Transverse colon (tissue), 4 donors: ENCODE measurements at regions of chr18 and their contacts with region 1.

Region 1: DNA sequence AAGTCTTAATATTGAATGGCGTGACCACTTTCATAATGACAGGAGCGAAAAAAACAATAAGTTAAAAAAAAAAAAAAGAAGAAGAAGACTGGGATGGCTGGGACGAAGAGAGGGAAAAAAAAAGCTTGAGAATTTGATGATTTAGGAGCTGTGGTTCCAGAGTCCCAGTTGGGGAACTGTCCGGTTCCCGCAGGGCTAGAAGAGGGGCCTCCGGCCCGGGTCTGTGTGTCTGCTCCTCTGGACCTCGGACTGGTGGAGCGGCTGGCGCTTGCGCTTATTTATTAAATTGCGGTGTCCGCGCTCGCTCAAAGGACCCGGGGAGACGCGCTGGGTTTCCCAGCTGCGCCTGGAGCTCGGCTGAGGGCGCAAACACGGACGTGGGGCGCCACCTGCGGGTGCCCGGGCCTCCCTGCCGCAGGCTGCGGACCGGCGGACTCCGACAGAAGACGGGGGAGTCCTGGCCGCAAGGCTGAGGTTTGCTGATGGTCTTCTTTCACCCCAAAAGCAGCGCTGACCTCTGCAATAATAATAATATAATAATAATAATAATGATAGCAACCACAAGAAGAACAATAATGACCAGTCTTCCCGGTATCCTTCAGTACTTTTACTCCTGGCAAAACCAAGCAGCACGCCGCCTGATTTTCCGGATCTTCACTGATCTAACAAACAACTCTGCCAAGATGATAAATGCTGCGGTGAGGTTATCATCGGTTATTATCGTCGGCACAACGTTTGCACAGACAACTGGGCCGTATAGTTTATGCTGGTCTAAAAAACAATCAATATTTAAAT is at the start of gene CBLN2:
- DNase-seq: peak; percentile 26
- H3K4me3 ChIP-seq: peak within 1 kb of the TSS in 1 of 4 donors; percentile 35
- H3K27ac ChIP-seq: no peak within 1 kb of the TSS
- H3K4me1 ChIP-seq: peaks cover 0 to 13% (median 2%) of the 10 kb centered on the region in 4 donors
- H3K27me3 ChIP-seq: peaks cover 48% of the 10 kb centered on the region
- CTCF ChIP-seq: peak; percentile 26 to 53 (median 51)
- EP300 ChIP-seq: no peak
- POLR2A ChIP-seq: no peak
- total RNA-seq, gene CBLN2: 0.60 to 1.3 (median 0.78) TPM

Region 2: DNA sequence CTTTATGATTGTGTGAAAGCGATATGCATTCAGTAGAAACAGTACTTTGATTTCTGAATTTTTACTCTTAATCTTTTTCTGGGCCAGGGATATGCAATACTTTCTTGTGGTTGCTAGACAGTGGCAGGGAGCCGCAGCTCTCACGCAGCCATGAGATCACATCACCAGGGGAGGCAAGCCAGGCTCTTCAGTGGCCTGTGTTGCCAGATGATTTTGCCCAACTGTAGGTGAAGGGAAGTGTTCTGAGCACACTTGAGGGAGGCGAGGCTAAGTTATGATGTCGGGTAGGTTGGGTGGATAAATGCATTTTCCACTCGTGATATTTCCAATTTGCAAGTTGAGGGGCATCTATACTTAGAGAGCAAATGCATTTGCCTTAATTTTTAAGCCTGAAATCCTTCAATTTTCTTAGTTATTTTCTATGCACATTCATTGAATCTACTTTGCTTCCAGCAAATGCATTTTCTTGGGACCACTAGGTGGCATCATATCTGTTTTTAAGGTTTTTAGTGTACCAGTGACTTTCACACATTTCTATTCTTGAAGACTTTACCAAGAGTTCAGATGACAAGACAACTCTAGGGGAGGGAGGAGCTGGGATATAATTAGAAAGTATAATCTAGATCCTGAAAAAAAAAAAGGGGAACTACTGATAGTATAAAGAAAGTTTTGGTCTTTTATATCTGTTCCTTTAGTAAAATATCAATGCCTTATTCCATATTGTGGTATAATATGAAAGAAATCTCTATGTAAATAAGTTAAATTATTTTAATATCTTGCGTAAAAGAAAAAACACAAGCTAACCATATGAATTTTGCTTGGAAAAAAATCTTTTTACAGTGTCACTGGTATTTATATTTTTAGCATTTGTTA is 1612.1 kb before region 1 on chr18:
- in situ Hi-C with region 1: loop called in 1 of 4 experiments (anchors 10 kb)
- intact Hi-C with region 1: loop called (anchors 5 kb)
- DNase-seq: no peak
- H3K4me3 ChIP-seq: no peak overlapping the region
- H3K27ac ChIP-seq: no peak overlapping the region
- H3K4me1 ChIP-seq: no peaks in the 10 kb centered on the region
- H3K27me3 ChIP-seq: no peaks in the 10 kb centered on the region
- CTCF ChIP-seq: peak in 4 of 5 experiments; percentile 27 to 50 (median 46)
- EP300 ChIP-seq: no peak
- POLR2A ChIP-seq: no peak

Region 3: GRCh38 chr18:72502671-72503431 is 41.4 kb before region 1 on chr18:
- in situ Hi-C with region 1: no loop called
- intact Hi-C with region 1: no loop called
- DNase-seq: no peak
- H3K4me3 ChIP-seq: no peak overlapping the region
- H3K27ac ChIP-seq: no peak overlapping the region
- H3K4me1 ChIP-seq: no peaks in the 10 kb centered on the region
- H3K27me3 ChIP-seq: no peaks in the 10 kb centered on the region
- CTCF ChIP-seq: no peak
- EP300 ChIP-seq: no peak
- POLR2A ChIP-seq: no peak

Region 4: DNA sequence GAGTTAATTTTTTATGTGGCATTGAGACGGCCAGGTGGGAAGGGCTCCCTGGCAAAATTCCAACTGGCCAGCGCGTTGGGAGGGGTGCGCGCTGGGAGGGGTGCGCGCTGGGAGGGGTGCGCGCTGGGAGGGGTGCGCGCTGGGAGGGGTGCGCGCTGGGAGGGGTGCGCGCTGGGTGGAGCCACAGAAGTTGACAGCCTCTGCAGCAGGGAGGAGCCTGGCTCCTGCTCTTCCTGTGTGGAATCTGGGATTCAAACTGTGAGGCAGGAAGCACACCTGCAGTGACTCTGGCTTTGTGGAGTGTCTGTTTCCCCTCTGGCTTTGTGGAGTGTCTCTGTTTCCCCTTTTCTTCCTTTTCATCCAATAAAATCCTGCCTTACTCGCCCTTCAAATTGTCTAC is 147.8 kb after region 1 on chr18:
- in situ Hi-C with region 1: no loop called
- intact Hi-C with region 1: no loop called
- DNase-seq: peak; percentile 44
- H3K4me3 ChIP-seq: peak overlapping the region in 2 of 4 donors; percentile 2 to 8
- H3K27ac ChIP-seq: no peak overlapping the region
- H3K4me1 ChIP-seq: peaks cover 4 to 20% (median 6%) of the 10 kb centered on the region in 4 donors
- H3K27me3 ChIP-seq: no peaks in the 10 kb centered on the region
- CTCF ChIP-seq: no peak
- EP300 ChIP-seq: no peak
- POLR2A ChIP-seq: no peak

Region 5: GRCh38 chr18:72704202-72704601 is 159.9 kb after region 1 on chr18:
- in situ Hi-C with region 1: no loop called
- intact Hi-C with region 1: no loop called
- DNase-seq: no peak
- H3K4me3 ChIP-seq: no peak overlapping the region
- H3K27ac ChIP-seq: no peak overlapping the region
- H3K4me1 ChIP-seq: no peaks in the 10 kb centered on the region
- H3K27me3 ChIP-seq: no peaks in the 10 kb centered on the region
- CTCF ChIP-seq: no peak
- EP300 ChIP-seq: no peak
- POLR2A ChIP-seq: no peak